ENCODE measurements at regions of chr10 and their contacts with region 1.

Region 1: GRCh38 chr10:95290461-95291364 is at the start of gene PDLIM1:
- DNase-seq: no peak
- ATAC-seq: peak; percentile 55
- H3K4me3 ChIP-seq: peak within 1 kb of the TSS; percentile 97
- H3K27ac ChIP-seq: peak within 1 kb of the TSS; percentile 98
- H3K4me1 ChIP-seq: peaks cover 47% of the 10 kb centered on the region
- H3K27me3 ChIP-seq: no peaks in the 10 kb centered on the region
- CTCF ChIP-seq: peak; percentile 21 to 30 (median 27); a peak in 5 of 6 replicates
- EP300 ChIP-seq: no peak
- POLR2A ChIP-seq: peak; percentile 96
- RAD21 ChIP-seq: no peak
- polyA plus RNA-seq, gene PDLIM1: 133 to 338 TPM

Region 2: DNA sequence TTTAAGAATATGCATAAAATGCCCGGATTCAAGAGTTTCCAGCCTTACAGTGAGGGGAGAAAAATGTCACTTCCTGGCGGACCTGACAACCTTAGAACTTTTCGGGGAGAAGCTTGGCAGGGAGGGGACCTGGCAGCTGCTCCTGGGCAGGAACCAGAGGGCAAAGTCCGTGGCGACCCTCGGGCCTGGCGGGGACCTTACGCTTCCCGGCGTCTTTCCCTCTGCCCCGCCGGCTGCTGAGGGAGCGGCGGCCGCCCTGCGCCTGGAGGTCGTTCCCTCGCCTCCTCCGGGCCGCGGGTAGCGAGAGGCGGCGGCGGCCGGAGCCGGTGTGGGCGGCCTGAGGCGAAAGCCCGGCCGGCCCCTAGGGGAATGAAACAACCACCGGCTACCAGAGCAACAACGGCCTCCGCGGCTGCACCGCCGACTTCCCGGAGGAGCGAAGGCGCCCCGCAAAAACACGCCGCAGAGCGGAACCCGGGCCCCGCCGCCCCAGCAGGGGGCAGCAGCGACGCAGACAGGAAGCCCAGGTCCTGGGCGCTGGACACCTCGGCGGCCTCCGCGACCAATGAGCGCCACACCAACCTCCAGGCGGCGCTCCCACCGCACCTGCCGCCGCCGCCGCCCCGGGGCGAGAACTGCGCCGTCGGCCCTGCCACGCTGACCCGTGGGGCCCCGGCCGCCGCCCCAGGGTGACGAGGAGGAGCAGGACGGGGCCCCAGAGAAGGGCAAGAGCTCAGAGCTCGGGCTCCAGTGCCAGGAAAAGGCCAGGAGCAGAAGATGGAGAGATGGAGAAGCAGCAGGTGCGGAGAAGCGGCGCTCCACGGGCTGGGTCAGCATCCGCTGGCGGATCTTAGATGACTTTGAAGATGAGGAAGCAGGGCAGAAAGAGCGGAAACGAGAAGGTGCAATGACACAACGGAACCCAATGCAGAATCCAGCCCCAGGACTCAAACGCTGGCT is 107.2 kb before region 1 on chr10:
- CTCF ChIA-PET with region 1: interaction called, 4 read pairs
- POLR2A ChIA-PET with region 1: no interaction called
- RAD21 ChIA-PET with region 1: no interaction called
- SMC1A ChIA-PET with region 1: interaction called, 3 read pairs
- in situ Hi-C with region 1: no loop called
- intact Hi-C with region 1: loop called (anchors 5 kb)
- DNase-seq: peak; percentile 27
- ATAC-seq: peak; percentile 99
- H3K4me3 ChIP-seq: peak overlapping the region; percentile 69
- H3K27ac ChIP-seq: no peak overlapping the region
- H3K4me1 ChIP-seq: no peaks in the 10 kb centered on the region
- H3K27me3 ChIP-seq: no peaks in the 10 kb centered on the region
- CTCF ChIP-seq: peak; percentile 84 to 98 (median 92)
- EP300 ChIP-seq: 0 out of 4 replicates have a peak, but pooled peaks of 1 of the 2 experiments have one; percentile 17
- POLR2A ChIP-seq: peak; percentile 69
- RAD21 ChIP-seq: peak; percentile 67

Region 3: GRCh38 chr10:95246579-95247051 is 44.1 kb before region 1 on chr10:
- CTCF ChIA-PET with region 1: interaction called, 176 read pairs
- POLR2A ChIA-PET with region 1: interaction called, 5 read pairs
- RAD21 ChIA-PET with region 1: interaction called, 38 read pairs
- SMC1A ChIA-PET with region 1: interaction called, 50 read pairs
- in situ Hi-C with region 1: no loop called
- intact Hi-C with region 1: loop called (anchors 1 kb)
- DNase-seq: no peak
- ATAC-seq: peak; percentile 81
- H3K4me3 ChIP-seq: no peak overlapping the region
- H3K27ac ChIP-seq: peak overlapping the region; percentile 78
- H3K4me1 ChIP-seq: peaks cover 47% of the 10 kb centered on the region
- H3K27me3 ChIP-seq: no peaks in the 10 kb centered on the region
- CTCF ChIP-seq: peak; percentile 77 to 85 (median 78)
- EP300 ChIP-seq: no peak
- POLR2A ChIP-seq: no peak
- RAD21 ChIP-seq: peak; percentile 77

Region 4: DNA sequence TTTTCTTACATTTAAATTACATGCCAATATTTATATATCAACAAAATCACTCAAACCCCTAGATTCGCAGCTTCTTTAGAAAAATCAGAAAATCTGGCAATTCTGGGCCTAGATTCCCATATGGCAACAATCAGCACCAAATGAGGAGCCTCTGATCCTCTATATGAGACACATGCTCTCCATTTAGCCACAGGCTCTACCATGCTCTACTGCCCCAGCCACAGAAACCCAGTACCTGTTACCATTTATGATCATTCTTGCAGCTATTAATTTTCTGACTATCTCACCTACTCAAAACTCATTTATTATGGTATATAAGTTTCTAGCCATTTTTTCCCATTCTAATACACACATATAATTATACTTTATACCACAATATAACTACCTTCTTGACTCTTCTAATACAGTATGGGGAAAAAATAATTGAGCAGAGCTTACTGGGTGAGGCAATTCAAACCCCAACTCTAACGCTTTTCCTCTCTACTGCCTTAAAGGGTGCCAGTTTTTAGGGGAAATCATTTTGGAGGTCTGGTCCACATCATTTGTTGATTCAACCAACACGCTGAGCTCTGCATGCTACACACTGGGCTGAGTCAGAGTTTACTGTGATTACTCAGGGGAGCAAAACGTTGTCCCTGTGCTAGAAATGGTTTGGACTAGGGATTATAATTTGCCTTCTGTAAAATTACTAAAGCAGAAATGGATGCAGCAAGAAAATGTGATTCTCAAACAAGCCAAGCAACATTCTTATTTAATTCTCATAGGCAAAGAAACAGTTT is 11.5 kb before region 1 on chr10:
- CTCF ChIA-PET with region 1: interaction called, 21 read pairs
- POLR2A ChIA-PET with region 1: interaction called, 14 read pairs
- RAD21 ChIA-PET with region 1: interaction called, 9 read pairs
- SMC1A ChIA-PET with region 1: interaction called, 47 read pairs
- in situ Hi-C with region 1: no loop called
- intact Hi-C with region 1: no loop called
- DNase-seq: no peak
- ATAC-seq: peak; percentile 59
- H3K4me3 ChIP-seq: peak overlapping the region; percentile 29; the same call in 1 of the 2 replicates
- H3K27ac ChIP-seq: peak overlapping the region; percentile 6; the same call in 1 of the 2 replicates
- H3K4me1 ChIP-seq: peaks cover 30% of the 10 kb centered on the region
- H3K27me3 ChIP-seq: no peaks in the 10 kb centered on the region
- CTCF ChIP-seq: no peak
- EP300 ChIP-seq: no peak
- POLR2A ChIP-seq: no peak
- RAD21 ChIP-seq: no peak

Region 5: DNA sequence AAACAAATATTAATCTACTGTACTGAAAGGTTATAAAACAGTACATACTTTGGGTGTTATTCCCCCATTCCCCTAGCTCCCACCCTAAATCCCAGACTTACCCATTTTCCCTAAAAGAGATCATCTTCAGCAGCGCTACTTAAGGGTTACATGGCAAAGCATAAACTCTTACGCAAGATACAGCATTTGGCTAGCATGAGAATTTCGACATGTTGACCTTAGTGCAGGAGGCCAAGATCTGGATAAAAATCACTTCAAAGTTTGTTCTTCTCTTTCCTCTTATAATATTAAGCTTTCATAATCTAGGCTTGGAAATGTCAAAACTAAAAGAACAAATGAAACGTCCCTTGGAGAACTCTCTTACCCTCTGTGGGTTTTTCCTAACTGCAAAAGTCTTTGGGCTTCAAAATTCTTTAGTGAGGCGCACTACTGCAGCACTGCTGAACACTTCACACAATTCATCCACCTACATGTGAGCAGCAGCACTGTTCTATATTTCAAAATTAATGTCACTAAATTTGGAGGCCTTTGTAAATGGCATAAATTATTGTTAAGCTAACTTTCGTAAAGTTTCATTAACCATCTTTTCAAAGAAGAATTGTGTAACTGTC is 59.6 kb after region 1 on chr10:
- CTCF ChIA-PET with region 1: interaction called, 17 read pairs
- POLR2A ChIA-PET with region 1: no interaction called
- RAD21 ChIA-PET with region 1: interaction called, 6 read pairs
- SMC1A ChIA-PET with region 1: interaction called, 9 read pairs
- in situ Hi-C with region 1: no loop called
- intact Hi-C with region 1: loop called (anchors 1 kb)
- DNase-seq: no peak
- ATAC-seq: no peak
- H3K4me3 ChIP-seq: no peak overlapping the region
- H3K27ac ChIP-seq: no peak overlapping the region
- H3K4me1 ChIP-seq: peaks cover 8% of the 10 kb centered on the region; the same call in 1 of the 2 replicates
- H3K27me3 ChIP-seq: no peaks in the 10 kb centered on the region
- CTCF ChIP-seq: no peak
- EP300 ChIP-seq: no peak
- POLR2A ChIP-seq: no peak
- RAD21 ChIP-seq: no peak

Region 6: GRCh38 chr10:96271016-96271829 is 980.5 kb after region 1 on chr10 and contains the start of gene BLNK:
- CTCF ChIA-PET with region 1: no interaction called
- POLR2A ChIA-PET with region 1: no interaction called
- RAD21 ChIA-PET with region 1: no interaction called
- SMC1A ChIA-PET with region 1: no interaction called
- in situ Hi-C with region 1: loop called (anchors 10 kb)
- intact Hi-C with region 1: loop called (anchors 10 kb)
- DNase-seq: peak; percentile 92
- ATAC-seq: peak; percentile 79
- H3K4me3 ChIP-seq: peak within 1 kb of the TSS; percentile 89
- H3K27ac ChIP-seq: peak within 1 kb of the TSS; percentile 98
- H3K4me1 ChIP-seq: peaks cover 32% of the 10 kb centered on the region
- H3K27me3 ChIP-seq: no peaks in the 10 kb centered on the region
- CTCF ChIP-seq: no peak
- EP300 ChIP-seq: peak in 1 of 2 experiments; percentile 74; a peak in 2 of 4 replicates
- POLR2A ChIP-seq: peak; percentile 93
- RAD21 ChIP-seq: no peak
- polyA plus RNA-seq, gene BLNK: 165 to 201 TPM

Measured in GM12878 (cell line).